KBM-7 (cell line): ENCODE measurements at regions of chr1 and their contacts with region 1.

Region 1: GRCh38 chr1:204162231-204163074 is 3.7 kb downstream of the REN start:
- DNase-seq: peak; percentile 81

Region 2: GRCh38 chr1:203880606-203881005 is 281.8 kb before region 1 on chr1:
- in situ Hi-C with region 1: no loop called
- DNase-seq: no peak

Region 3: DNA sequence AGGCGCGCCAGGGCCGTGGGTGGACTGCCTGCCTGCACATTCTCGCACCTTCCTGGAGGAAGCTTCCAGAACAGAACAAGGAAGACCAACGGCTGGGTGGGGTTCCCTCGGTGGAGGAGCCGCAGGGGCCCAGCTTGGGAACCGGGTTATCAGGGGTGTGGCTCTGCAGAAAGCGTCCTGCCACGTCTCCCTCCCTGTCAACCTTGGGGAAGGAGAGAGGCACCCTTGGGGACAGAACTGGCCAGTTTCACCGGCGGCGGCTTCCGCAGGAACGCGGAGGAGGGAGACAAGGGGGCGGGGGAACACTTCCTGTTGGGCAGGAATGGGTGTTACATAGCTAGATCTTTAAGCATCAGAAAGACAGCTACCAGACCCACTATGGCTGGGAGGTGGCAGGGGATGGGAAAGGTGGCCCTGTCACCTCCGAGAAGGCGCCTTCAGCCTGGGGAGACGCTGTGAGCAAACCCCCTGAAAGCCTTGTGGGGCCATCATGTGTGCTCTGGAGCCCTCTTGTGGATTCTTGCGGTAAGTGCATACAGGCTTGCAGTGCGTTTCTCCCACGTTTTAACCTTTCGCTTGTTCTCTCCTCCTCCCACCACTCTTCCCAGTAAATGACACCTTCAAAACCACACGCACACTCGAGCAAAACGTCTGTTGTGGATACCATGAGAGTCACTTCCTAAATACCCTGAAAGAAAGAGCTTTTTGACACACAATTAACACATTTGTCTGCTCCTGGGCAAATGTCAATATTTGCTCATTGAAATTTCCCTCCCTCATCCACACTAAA is 201.1 kb after region 1 on chr1:
- in situ Hi-C with region 1: loop called (anchors 25 kb)
- DNase-seq: peak; percentile 89